Mammary epithelial cell (primary cell): ENCODE measurements at regions of chr17 and their contacts with region 1.

Region 1: DNA sequence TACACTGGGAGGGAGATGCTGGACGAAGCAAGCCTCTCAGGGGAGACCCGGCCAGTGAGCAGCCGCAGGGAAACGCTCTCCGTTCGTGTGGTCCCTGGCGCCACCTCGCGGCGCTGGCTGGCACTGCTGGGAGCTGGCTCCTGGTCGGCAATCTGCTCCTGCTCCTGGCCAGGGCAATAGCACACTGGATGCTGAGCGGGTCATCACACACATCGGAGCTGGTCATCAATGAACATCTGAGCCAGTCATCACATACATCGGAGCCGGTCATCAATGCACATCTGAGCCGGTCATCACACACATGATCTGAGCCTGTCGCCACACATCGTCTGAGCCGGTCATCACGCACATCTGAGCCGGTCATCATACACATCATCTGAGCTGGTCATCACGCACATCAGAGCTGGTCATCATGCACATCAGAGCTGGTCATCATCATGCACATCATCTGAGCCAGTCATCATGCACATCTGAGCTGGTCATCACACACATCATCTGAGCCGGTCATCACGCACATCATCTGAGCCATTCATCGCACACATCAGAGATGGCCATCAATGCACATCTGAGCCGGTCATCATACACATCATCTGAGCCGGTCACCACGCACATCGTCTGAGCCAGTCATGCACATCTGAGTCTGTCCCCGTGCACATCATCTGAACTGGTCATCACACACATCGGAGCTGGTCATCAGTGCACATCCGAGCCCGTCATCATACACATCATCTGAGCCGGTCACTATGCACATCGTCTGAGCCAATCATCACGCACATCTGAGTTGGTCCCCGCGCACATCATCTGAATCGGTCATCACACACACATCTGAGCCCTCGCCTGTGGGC is 217.3 kb downstream of the RBFOX3 start:
- DNase-seq: peak; percentile 43
- H3K4me3 ChIP-seq: no peak overlapping the region
- H3K27ac ChIP-seq: no peak overlapping the region
- H3K4me1 ChIP-seq: no peaks in the 10 kb centered on the region
- H3K27me3 ChIP-seq: peaks cover 5% of the 10 kb centered on the region
- CTCF ChIP-seq: peak; percentile 95 to 98

Region 2: GRCh38 chr17:79027925-79028813 is 365.4 kb before region 1 on chr17:
- CTCF ChIA-PET with region 1: no interaction called
- dilution Hi-C with region 1: loop called (anchors 5 kb)
- in situ Hi-C with region 1: no loop called
- intact Hi-C with region 1: no loop called
- DNase-seq: no peak
- H3K4me3 ChIP-seq: no peak overlapping the region
- H3K27ac ChIP-seq: peak overlapping the region; percentile 46
- H3K4me1 ChIP-seq: peaks cover 47% of the 10 kb centered on the region
- H3K27me3 ChIP-seq: no peaks in the 10 kb centered on the region
- CTCF ChIP-seq: peak in 1 of 2 donors; percentile 32

Region 3: DNA sequence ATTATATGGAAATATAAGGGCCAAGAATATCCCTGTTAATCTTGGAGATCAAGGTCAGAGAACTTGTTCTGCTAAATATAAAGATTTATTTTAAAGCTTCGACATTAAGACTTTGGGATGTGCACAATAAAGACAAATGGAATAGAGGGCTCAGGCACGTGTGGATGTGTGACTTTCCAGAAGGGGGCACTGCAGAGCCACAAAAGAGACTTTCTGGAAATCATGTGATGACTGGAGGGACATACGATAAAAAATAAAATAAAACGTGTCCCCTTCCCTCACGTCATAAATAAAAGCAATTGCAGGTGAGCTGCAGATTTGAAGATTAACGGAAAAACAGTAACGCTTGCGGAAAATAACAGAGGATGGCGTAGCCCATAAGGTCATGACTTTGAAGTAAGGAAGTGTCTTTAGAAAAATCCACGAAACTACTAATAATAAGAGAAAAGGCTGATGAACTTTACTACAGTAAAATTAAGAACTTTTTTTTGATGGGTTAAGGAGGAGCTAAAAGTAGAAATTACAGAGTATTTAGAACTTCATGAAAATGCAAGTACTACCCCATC is 328.4 kb before region 1 on chr17:
- CTCF ChIA-PET with region 1: interaction called, 7 read pairs
- dilution Hi-C with region 1: no loop called
- in situ Hi-C with region 1: no loop called
- intact Hi-C with region 1: loop called (anchors 5 kb)
- DNase-seq: no peak
- H3K4me3 ChIP-seq: no peak overlapping the region
- H3K27ac ChIP-seq: no peak overlapping the region
- H3K4me1 ChIP-seq: no peaks in the 10 kb centered on the region
- H3K27me3 ChIP-seq: no peaks in the 10 kb centered on the region
- CTCF ChIP-seq: peak; percentile 39 to 52

Region 4: GRCh38 chr17:79188048-79188447 is 205.5 kb before region 1 on chr17:
- CTCF ChIA-PET with region 1: interaction called, 7 read pairs
- dilution Hi-C with region 1: loop called (anchors 5 kb)
- in situ Hi-C with region 1: loop called (anchors 5 kb)
- intact Hi-C with region 1: loop called (anchors 1 kb)
- DNase-seq: no peak
- H3K4me3 ChIP-seq: no peak overlapping the region
- H3K27ac ChIP-seq: no peak overlapping the region
- H3K4me1 ChIP-seq: no peaks in the 10 kb centered on the region
- H3K27me3 ChIP-seq: peaks cover 16% of the 10 kb centered on the region
- CTCF ChIP-seq: peak; percentile 44 to 86

Region 5: DNA sequence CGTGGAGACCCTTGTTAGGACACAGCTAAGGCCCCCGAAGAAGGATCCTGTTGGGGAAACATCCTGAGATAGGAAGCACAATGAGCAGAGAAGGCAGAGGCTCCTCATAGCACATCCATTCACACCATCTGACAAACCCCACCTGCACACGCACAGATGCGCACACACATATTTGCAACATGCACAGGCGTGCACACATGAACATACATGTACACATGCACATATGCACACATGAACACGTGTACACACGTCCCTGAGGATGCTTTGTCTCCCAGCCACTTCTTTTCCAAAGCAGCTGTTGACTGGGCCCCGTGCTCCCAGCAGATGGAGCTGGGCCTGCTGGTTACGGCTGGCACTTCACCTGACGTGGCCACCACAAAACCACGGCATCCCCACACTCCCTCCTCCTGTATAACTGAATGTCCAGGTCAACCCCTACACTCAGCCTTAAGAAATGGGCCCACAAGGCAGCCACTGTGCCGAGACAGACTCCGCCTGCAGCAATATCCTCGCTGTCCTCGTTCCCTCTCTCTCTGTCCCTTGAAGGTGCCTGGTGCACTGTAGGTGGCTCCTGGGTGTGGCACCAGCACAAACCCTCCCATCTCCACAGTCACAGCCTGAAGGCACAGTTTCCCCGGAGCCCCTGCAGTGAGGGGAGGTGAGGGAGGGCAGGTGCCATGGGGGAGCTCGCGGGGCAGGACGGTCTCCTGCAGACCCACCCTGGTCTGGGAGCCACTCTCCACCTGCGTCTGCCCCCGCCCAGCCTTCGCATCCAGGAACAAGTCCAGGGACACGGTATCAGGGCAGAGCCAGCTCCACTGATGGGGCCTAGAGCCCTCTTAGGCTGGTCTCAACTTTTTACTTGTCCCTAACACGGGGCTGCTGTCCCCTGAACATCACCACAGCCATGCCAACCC is 34.3 kb after region 1 on chr17:
- CTCF ChIA-PET with region 1: no interaction called
- dilution Hi-C with region 1: no loop called
- in situ Hi-C with region 1: no loop called
- intact Hi-C with region 1: no loop called
- DNase-seq: no peak
- H3K4me3 ChIP-seq: no peak overlapping the region
- H3K27ac ChIP-seq: no peak overlapping the region
- H3K4me1 ChIP-seq: no peaks in the 10 kb centered on the region
- H3K27me3 ChIP-seq: no peaks in the 10 kb centered on the region
- CTCF ChIP-seq: no peak

Region 6: GRCh38 chr17:79589669-79590522 is 196.3 kb after region 1 on chr17:
- CTCF ChIA-PET with region 1: no interaction called
- dilution Hi-C with region 1: no loop called
- in situ Hi-C with region 1: no loop called
- intact Hi-C with region 1: no loop called
- DNase-seq: no peak
- H3K4me3 ChIP-seq: no peak overlapping the region
- H3K27ac ChIP-seq: no peak overlapping the region
- H3K4me1 ChIP-seq: no peaks in the 10 kb centered on the region
- H3K27me3 ChIP-seq: no peaks in the 10 kb centered on the region
- CTCF ChIP-seq: no peak

Region 7: GRCh38 chr17:79707931-79708891 is 314.6 kb after region 1 on chr17:
- CTCF ChIA-PET with region 1: no interaction called
- dilution Hi-C with region 1: no loop called
- in situ Hi-C with region 1: no loop called
- intact Hi-C with region 1: loop called (anchors 2 kb)
- DNase-seq: peak; percentile 25
- H3K4me3 ChIP-seq: no peak overlapping the region
- H3K27ac ChIP-seq: no peak overlapping the region
- H3K4me1 ChIP-seq: no peaks in the 10 kb centered on the region
- H3K27me3 ChIP-seq: no peaks in the 10 kb centered on the region
- CTCF ChIP-seq: peak; percentile 61 to 73